ENCODE measurements at regions of chr5 and their contacts with region 1.

Region 1: GRCh38 chr5:149367249-149367971 is 9.6 kb downstream of the PCYOX1L start:
- DNase-seq: peak in 7 of 9 donors; percentile 25 to 65 (median 49)
- ATAC-seq: peak; percentile 79
- H3K4me3 ChIP-seq: no peak overlapping the region
- H3K4me3 Mint-ChIP-seq: no peak overlapping the region
- H3K27ac ChIP-seq: no peak overlapping the region
- H3K27ac Mint-ChIP-seq: peak overlapping the region in 7 of 9 donors; percentile 13 to 68 (median 41)
- H3K4me1 ChIP-seq: peaks cover 0 to 7% of the 10 kb centered on the region in 2 donors
- H3K4me1 Mint-ChIP-seq: peaks cover 3 to 48% (median 27%) of the 10 kb centered on the region in 7 donors
- H3K27me3 ChIP-seq: no peaks in the 10 kb centered on the region
- H3K27me3 Mint-ChIP-seq: no peaks in the 10 kb centered on the region

Region 2: DNA sequence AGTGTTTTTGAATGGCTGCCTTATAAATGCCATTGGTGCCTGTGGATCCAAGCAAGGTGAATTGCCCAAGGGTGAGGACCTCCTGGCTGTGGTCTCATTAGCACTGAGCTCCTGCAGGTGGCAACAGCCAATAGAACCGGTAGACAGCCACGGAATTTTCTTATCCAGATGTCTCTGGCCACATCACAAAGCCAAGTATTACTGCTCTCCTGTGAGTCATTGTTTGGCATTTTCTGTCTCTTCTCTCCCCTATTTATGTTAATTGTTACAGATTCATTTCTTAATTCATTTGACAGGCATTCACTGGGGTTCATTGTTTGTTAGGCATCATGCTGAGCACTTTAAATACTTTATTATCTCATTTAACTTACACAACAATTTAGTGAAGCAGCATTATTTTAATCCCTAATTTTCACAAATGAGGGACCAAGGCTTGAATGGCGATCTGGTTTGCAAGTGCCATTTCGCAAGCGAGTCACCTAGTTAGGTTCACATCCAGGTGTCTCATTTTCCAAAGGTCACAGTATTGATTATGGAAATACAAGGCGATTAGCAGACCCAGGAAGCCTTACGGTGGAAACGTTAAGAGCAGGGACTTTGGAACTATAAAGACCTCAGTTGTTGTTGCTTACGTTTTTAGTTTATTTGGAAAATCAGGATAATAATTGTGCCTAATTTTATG is 1799.4 kb before region 1 on chr5:
- CTCF ChIA-PET with region 1: no interaction called
- POLR2A ChIA-PET with region 1: no interaction called
- intact Hi-C with region 1: no loop called
- DNase-seq: no peak
- ATAC-seq: no peak
- H3K4me3 ChIP-seq: no peak overlapping the region
- H3K4me3 Mint-ChIP-seq: no peak overlapping the region
- H3K27ac ChIP-seq: no peak overlapping the region
- H3K27ac Mint-ChIP-seq: no peak overlapping the region
- H3K4me1 ChIP-seq: no peaks in the 10 kb centered on the region
- H3K4me1 Mint-ChIP-seq: no peaks in the 10 kb centered on the region
- H3K27me3 ChIP-seq: no peaks in the 10 kb centered on the region
- H3K27me3 Mint-ChIP-seq: peaks cover 0 to 6% (median 0%) of the 10 kb centered on the region in 5 donors

Region 3: GRCh38 chr5:149141224-149141956 is 226.0 kb before region 1 on chr5 and contains the start of gene ABLIM3:
- CTCF ChIA-PET with region 1: no interaction called
- POLR2A ChIA-PET with region 1: no interaction called
- intact Hi-C with region 1: loop called (anchors 1 kb)
- DNase-seq: peak; percentile 49 to 87 (median 74)
- ATAC-seq: peak; percentile 96
- H3K4me3 ChIP-seq: peak within 1 kb of the TSS; percentile 62
- H3K4me3 Mint-ChIP-seq: peak within 1 kb of the TSS; percentile 11 to 79 (median 62)
- H3K27ac ChIP-seq: no peak within 1 kb of the TSS
- H3K27ac Mint-ChIP-seq: peak within 1 kb of the TSS in 1 of 9 donors; percentile 71
- H3K4me1 ChIP-seq: peaks cover 3 to 4% of the 10 kb centered on the region in 2 donors
- H3K4me1 Mint-ChIP-seq: peaks cover 0 to 6% (median 0%) of the 10 kb centered on the region in 7 donors
- H3K27me3 ChIP-seq: peaks cover 0 to 4% of the 10 kb centered on the region in 2 donors
- H3K27me3 Mint-ChIP-seq: peaks cover 5 to 58% (median 28%) of the 10 kb centered on the region in 5 donors
- total RNA-seq, gene ABLIM3: 0.08 to 1.3 TPM in 2 of 5 experiments, not detected in the others

Region 4: GRCh38 chr5:149298842-149299404 is 68.5 kb before region 1 on chr5:
- CTCF ChIA-PET with region 1: interaction called, 10 read pairs
- POLR2A ChIA-PET with region 1: interaction called, 7 read pairs
- intact Hi-C with region 1: no loop called
- DNase-seq: no peak
- ATAC-seq: no peak
- H3K4me3 ChIP-seq: no peak overlapping the region
- H3K4me3 Mint-ChIP-seq: peak overlapping the region in 9 of 10 donors; percentile 23 to 84 (median 71)
- H3K27ac ChIP-seq: no peak overlapping the region
- H3K27ac Mint-ChIP-seq: peak overlapping the region in 8 of 9 donors; percentile 60 to 95 (median 84)
- H3K4me1 ChIP-seq: peaks cover 0 to 56% of the 10 kb centered on the region in 2 donors
- H3K4me1 Mint-ChIP-seq: peaks cover 4 to 67% (median 57%) of the 10 kb centered on the region in 7 donors
- H3K27me3 ChIP-seq: no peaks in the 10 kb centered on the region
- H3K27me3 Mint-ChIP-seq: peaks cover 0 to 11% (median 0%) of the 10 kb centered on the region in 5 donors

Region 5: GRCh38 chr5:149317281-149318048 is 49.9 kb before region 1 on chr5:
- CTCF ChIA-PET with region 1: interaction called, 147 read pairs
- POLR2A ChIA-PET with region 1: interaction called, 5 read pairs
- intact Hi-C with region 1: loop called (anchors 1 kb)
- DNase-seq: peak in 7 of 9 donors; percentile 18 to 66 (median 57)
- ATAC-seq: peak; percentile 77
- H3K4me3 ChIP-seq: no peak overlapping the region
- H3K4me3 Mint-ChIP-seq: no peak overlapping the region
- H3K27ac ChIP-seq: no peak overlapping the region
- H3K27ac Mint-ChIP-seq: peak overlapping the region in 1 of 9 donors; percentile 4
- H3K4me1 ChIP-seq: peaks cover 0 to 3% of the 10 kb centered on the region in 2 donors
- H3K4me1 Mint-ChIP-seq: peaks cover 0 to 5% (median 4%) of the 10 kb centered on the region in 7 donors
- H3K27me3 ChIP-seq: no peaks in the 10 kb centered on the region
- H3K27me3 Mint-ChIP-seq: no peaks in the 10 kb centered on the region

Region 6: DNA sequence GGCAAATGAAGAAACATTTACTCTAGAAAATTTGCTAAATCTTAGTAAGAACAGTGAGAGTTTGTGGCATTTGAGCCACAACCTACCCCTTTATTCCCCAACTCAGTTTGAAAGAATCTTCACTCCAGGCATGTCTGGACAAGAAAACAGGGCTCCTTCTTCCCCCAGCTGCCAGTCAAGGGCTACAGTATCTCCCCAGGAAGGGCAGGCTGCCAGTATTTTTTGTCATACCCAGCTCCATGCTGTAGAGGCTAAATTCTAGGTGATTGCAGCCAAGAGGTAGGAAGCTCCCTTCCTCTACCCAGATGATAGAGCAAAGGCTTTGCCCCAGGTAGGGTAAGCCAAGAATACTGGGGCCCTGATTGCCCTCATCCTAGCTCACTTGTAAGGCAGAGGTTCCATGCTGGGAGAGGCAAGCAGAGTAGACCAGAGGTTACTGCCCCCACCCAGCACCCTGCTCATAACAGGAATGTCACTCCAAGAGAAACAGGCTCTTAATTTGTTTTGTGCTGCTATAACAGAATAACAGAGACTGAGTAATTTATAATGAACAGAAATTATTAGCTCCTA is 42.2 kb before region 1 on chr5:
- CTCF ChIA-PET with region 1: interaction called, 147 read pairs
- POLR2A ChIA-PET with region 1: interaction called, 4 read pairs
- intact Hi-C with region 1: no loop called
- DNase-seq: no peak
- ATAC-seq: no peak
- H3K4me3 ChIP-seq: no peak overlapping the region
- H3K4me3 Mint-ChIP-seq: no peak overlapping the region
- H3K27ac ChIP-seq: no peak overlapping the region
- H3K27ac Mint-ChIP-seq: no peak overlapping the region
- H3K4me1 ChIP-seq: no peaks in the 10 kb centered on the region
- H3K4me1 Mint-ChIP-seq: peaks cover 0 to 4% (median 0%) of the 10 kb centered on the region in 7 donors
- H3K27me3 ChIP-seq: no peaks in the 10 kb centered on the region
- H3K27me3 Mint-ChIP-seq: no peaks in the 10 kb centered on the region

Region 7: GRCh38 chr5:149381987-149382340 is 14.6 kb after region 1 on chr5:
- CTCF ChIA-PET with region 1: interaction called, 18 read pairs
- POLR2A ChIA-PET with region 1: no interaction called
- intact Hi-C with region 1: no loop called
- DNase-seq: peak; percentile 41 to 76 (median 62)
- ATAC-seq: peak; percentile 85
- H3K4me3 ChIP-seq: no peak overlapping the region
- H3K4me3 Mint-ChIP-seq: peak overlapping the region in 1 of 10 donors; percentile 46
- H3K27ac ChIP-seq: no peak overlapping the region
- H3K27ac Mint-ChIP-seq: no peak overlapping the region
- H3K4me1 ChIP-seq: no peaks in the 10 kb centered on the region
- H3K4me1 Mint-ChIP-seq: peaks cover 0 to 5% (median 4%) of the 10 kb centered on the region in 7 donors
- H3K27me3 ChIP-seq: no peaks in the 10 kb centered on the region
- H3K27me3 Mint-ChIP-seq: no peaks in the 10 kb centered on the region

Region 8: DNA sequence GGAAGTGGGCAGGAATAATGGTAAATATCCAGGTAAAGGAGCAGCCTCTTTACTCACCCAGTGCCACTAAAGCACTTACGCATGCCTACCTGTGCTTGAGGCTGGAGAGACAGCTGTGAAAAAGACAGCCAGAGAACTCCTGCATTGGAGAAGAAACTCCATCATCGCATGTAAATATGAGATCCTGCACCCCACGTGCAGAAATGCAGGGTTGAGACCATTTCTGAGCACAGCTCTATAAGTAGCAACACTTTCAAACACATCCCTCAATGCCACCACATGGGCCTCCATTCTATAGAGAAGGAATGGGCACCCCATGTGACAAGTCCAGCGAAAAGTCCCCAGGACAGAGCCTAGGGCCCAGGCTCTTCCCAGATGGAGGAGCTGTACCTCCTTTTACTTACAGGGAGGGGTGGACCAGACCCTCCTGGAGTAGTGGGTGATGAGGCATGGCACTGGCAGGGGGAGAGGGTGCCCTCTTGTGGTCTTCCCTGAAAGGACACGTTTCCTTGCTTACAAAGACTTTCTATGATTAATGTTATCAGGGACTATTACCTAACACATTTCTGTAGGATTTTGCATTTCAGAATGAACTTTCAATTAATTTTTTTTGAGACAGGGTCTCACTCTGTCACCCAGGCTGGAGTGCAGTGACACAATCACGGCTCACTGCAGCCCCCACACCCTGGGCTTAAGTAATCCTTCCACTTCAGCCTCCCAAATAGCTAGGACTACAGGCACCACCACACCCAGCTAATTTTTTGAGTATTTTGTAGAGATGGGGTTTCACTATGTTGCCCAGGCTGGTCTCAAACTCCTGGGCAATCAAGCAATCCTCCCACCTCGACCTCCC is 67.0 kb after region 1 on chr5:
- CTCF ChIA-PET with region 1: interaction called, 6 read pairs
- POLR2A ChIA-PET with region 1: interaction called, 3 read pairs
- intact Hi-C with region 1: loop called in 1 of 2 experiments (anchors 1 kb)
- DNase-seq: peak in 8 of 9 donors; percentile 15 to 55 (median 43)
- ATAC-seq: peak; percentile 58
- H3K4me3 ChIP-seq: no peak overlapping the region
- H3K4me3 Mint-ChIP-seq: no peak overlapping the region
- H3K27ac ChIP-seq: no peak overlapping the region
- H3K27ac Mint-ChIP-seq: no peak overlapping the region
- H3K4me1 ChIP-seq: peaks cover 0 to 6% of the 10 kb centered on the region in 2 donors
- H3K4me1 Mint-ChIP-seq: peaks cover 0 to 26% (median 8%) of the 10 kb centered on the region in 7 donors
- H3K27me3 ChIP-seq: no peaks in the 10 kb centered on the region
- H3K27me3 Mint-ChIP-seq: no peaks in the 10 kb centered on the region

Region 9: GRCh38 chr5:149656576-149657182 is 289.3 kb after region 1 on chr5:
- CTCF ChIA-PET with region 1: no interaction called
- POLR2A ChIA-PET with region 1: no interaction called
- intact Hi-C with region 1: no loop called
- DNase-seq: no peak
- ATAC-seq: peak; percentile 44
- H3K4me3 ChIP-seq: no peak overlapping the region
- H3K4me3 Mint-ChIP-seq: no peak overlapping the region
- H3K27ac ChIP-seq: no peak overlapping the region
- H3K27ac Mint-ChIP-seq: no peak overlapping the region
- H3K4me1 ChIP-seq: no peaks in the 10 kb centered on the region
- H3K4me1 Mint-ChIP-seq: no peaks in the 10 kb centered on the region
- H3K27me3 ChIP-seq: no peaks in the 10 kb centered on the region
- H3K27me3 Mint-ChIP-seq: peaks cover 5 to 25% (median 10%) of the 10 kb centered on the region in 5 donors

Region 10: GRCh38 chr5:150582241-150583109 is 1215.1 kb after region 1 on chr5:
- CTCF ChIA-PET with region 1: no interaction called
- POLR2A ChIA-PET with region 1: no interaction called
- intact Hi-C with region 1: no loop called
- DNase-seq: no peak
- ATAC-seq: no peak
- H3K4me3 ChIP-seq: no peak overlapping the region
- H3K4me3 Mint-ChIP-seq: no peak overlapping the region
- H3K27ac ChIP-seq: no peak overlapping the region
- H3K27ac Mint-ChIP-seq: no peak overlapping the region
- H3K4me1 ChIP-seq: no peaks in the 10 kb centered on the region
- H3K4me1 Mint-ChIP-seq: no peaks in the 10 kb centered on the region
- H3K27me3 ChIP-seq: peaks cover 0 to 3% of the 10 kb centered on the region in 2 donors
- H3K27me3 Mint-ChIP-seq: peaks cover 0 to 20% (median 4%) of the 10 kb centered on the region in 5 donors